AG04449 (cell line): ENCODE measurements at regions of chr10 and their contacts with region 1.

Region 1: GRCh38 chr10:69237528-69238159 is 17.5 kb downstream of the HKDC1 start:
- DNase-seq: no peak
- H3K4me3 ChIP-seq: no peak overlapping the region
- CTCF ChIP-seq: peak; percentile 78

Region 2: GRCh38 chr10:69061305-69062161 is 176.1 kb before region 1 on chr10:
- CTCF ChIA-PET with region 1: no interaction called
- POLR2A ChIA-PET with region 1: no interaction called
- DNase-seq: peak; percentile 92
- H3K4me3 ChIP-seq: peak overlapping the region; percentile 49
- CTCF ChIP-seq: no peak

Region 3: GRCh38 chr10:69101451-69102095 is 136.1 kb before region 1 on chr10:
- CTCF ChIA-PET with region 1: no interaction called
- POLR2A ChIA-PET with region 1: no interaction called
- DNase-seq: no peak
- H3K4me3 ChIP-seq: no peak overlapping the region
- CTCF ChIP-seq: no peak

Region 4: DNA sequence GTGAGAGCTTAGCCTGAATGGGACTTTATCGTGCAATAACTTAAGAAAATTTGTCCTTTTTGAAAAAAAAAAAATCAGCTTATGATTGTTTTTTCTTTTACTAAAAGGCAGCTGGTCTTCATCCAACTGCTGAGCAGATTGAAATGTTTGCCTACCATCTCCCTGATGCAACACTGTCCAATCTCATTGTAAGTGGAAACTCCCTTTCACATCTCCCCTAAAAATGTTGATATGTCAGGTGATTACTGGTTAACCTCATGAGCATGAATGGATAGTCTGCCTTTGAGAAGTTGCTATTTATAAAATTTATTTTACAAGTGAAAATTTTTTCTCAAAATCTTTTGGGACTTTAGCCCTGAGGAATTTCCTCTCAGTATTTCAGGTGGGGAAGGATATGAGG is 35.3 kb before region 1 on chr10:
- CTCF ChIA-PET with region 1: no interaction called
- POLR2A ChIA-PET with region 1: no interaction called
- DNase-seq: no peak
- H3K4me3 ChIP-seq: no peak overlapping the region
- CTCF ChIP-seq: no peak

Region 5: GRCh38 chr10:69248117-69248730 is 10.6 kb after region 1 on chr10:
- CTCF ChIA-PET with region 1: interaction called, 15 read pairs
- POLR2A ChIA-PET with region 1: no interaction called
- DNase-seq: no peak
- H3K4me3 ChIP-seq: no peak overlapping the region
- CTCF ChIP-seq: no peak